Activated CD4-positive, alpha-beta T cell treated with anti-CD3 and anti-CD28 coated beads for 36 hours (primary cell): ENCODE measurements at regions of chr2 and their contacts with region 1.

Region 1: DNA sequence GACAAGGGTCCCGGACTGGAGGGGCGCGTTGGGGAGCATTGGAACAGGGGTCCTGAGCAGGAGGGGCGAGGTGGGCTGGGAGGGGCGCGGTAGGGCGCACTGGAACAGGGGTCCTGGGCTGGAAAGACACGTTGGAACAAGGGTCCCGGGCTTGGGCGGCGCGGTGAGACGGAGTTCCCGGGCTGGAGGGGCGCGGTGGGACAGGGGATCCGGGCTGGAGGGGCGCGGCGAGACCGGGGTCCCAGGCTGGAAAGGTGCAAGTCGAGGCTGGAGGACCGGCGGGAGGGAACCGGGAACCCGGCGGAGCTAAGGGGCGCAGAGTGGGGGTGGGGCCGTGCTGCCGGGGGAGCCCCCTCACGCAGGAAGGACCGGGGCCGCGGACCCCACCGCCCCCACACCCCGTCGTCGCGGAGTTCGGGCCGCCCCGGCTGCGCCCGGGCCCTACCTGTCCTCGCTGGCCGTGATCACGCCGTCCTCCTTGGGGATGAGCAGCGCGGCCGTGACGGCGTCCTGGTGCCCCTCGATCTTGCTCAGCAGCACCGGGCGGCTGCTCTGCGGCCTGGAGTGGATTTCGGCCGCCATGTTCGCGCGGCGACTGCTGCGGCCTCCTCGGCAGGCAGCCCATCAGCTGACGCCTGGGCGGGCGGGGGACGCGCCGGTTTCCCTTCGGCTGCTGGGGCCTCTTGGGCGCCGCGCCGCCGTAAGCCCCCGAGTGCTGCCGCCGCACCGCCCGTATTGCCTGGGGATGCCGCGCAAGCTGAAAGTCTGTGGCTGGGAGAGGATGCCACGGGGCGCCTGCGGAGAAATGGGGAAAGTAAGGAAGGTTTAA is at the start of gene WDFY1:
- DNase-seq: peak; percentile 90
- ATAC-seq: peak; percentile 52
- H3K4me3 Mint-ChIP-seq: peak within 1 kb of the TSS; percentile 90
- H3K27ac Mint-ChIP-seq: peak within 1 kb of the TSS; percentile 90
- H3K4me1 Mint-ChIP-seq: peaks cover 62% of the 10 kb centered on the region
- H3K27me3 Mint-ChIP-seq: peaks cover 1% of the 10 kb centered on the region
- total RNA-seq, gene WDFY1: 33.6 to 37.5 TPM

Region 2: DNA sequence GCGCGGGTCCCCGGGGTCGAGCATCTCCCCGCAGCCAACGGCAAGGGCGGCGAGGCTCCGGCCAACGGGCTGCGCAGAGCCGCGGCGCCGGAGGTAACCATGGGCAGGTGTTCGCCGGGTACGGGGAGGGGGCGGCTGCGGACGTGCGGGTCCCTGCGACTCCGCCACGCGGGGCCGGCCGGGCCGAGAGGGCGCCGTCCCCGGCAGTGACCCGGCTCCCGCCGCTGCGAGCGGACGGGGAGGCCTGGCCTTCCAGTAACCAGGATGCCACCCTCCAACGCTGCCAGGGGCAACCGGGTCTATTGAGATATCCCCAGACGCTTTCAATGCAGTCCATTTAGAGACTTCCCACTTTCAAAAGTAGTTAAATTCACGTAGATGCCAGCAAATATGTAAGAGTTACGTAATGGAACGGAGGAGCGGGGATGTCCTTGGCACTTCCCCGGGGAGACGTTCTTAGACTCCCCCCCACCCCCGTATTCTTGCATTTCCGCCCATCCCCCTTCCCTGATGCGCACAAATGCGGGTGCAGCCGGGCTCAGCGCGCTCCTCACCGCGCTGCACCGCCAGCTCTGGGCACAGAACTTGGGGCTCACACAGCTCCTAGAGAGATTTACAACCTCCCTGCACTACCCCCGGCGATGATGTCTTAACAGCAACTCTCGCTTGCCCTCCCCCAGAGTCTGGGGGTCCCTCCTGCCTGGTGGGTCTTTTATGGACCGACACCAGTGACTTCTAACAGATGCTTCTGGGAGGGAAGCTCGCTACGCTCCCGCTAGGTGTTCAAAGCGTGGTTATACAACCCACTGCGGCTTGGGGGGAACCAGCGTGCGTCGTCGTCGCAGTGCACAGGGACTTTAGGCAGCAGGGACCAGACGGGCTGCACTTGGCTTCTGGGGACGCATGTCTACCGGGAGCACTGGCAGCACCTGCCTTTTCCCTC is 1519.9 kb before region 1 on chr2:
- CTCF ChIA-PET with region 1: no interaction called
- POLR2A ChIA-PET with region 1: no interaction called
- intact Hi-C with region 1: loop called in 1 of 2 experiments (anchors 5 kb)
- DNase-seq: peak; percentile 62
- ATAC-seq: peak; percentile 27
- H3K4me3 Mint-ChIP-seq: peak overlapping the region; percentile 85
- H3K27ac Mint-ChIP-seq: peak overlapping the region; percentile 90
- H3K4me1 Mint-ChIP-seq: peaks cover 50% of the 10 kb centered on the region
- H3K27me3 Mint-ChIP-seq: peaks cover 42% of the 10 kb centered on the region

Region 3: DNA sequence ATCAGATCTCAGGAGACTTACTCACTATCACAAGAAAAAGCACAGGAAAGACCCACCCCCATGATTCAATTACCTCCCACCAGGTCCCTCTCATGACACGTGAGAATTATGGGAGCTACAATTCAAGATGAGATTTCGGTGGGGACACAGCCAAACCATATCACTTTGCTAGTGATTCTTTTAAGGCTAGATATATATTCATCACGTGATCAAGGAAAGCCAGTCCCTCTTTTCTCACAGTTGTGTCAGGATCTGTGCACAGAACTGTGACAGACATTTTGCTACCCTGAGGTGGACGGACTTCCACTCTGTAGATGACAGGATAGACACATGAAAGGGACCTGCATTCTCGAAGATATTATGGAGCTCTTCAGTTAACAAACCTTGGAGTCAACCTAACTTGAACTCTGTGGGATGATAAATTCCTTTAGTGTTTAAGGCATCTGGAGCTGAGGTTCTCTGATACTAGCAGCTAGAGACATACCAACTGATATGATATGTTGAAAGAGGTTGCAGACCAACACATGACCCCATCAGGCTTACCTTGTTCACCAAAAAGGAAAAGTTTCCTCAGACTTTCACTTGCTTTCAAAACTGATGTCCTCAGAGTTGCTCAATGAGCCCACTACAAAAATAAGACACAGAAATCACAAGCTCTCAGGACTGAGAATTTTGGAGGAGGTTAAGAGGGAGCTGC is 276.5 kb before region 1 on chr2:
- CTCF ChIA-PET with region 1: no interaction called
- POLR2A ChIA-PET with region 1: no interaction called
- intact Hi-C with region 1: no loop called
- DNase-seq: no peak
- ATAC-seq: no peak
- H3K4me3 Mint-ChIP-seq: no peak overlapping the region
- H3K27ac Mint-ChIP-seq: no peak overlapping the region
- H3K4me1 Mint-ChIP-seq: no peaks in the 10 kb centered on the region
- H3K27me3 Mint-ChIP-seq: peaks cover 10% of the 10 kb centered on the region

Region 4: DNA sequence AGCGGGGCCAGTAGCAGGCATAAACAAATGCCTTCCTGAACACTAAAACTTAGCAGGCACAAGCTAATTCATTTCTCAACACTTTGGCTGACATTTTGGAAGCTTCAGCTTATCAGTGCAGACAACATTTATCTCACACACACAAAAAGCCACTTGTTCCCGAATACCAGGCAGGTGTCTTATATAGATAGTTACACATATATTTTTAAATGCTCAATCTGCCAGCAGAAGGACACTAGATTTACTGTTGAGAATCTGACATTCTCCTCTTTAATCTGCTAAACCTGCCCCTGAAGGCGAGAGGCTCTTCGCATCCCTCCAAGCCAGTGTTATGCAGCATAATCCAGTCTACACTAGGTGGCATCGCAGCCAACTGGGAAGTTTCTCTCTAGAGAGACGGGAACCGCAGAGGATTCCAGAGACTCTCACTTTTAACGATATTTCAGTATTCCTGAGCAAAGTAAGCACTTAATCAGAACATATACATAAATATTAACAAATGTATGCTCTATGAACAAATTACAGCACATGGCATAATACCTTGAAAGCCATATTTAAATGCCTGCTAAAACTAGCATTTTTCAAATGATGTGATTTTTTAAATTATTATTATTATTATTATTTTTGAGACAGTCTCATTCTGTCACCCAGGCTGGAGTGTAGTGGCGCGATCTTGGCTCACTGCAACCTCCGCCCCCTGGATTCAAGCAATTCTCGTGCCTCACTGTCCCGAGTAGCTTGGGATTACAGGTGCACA is 252.5 kb before region 1 on chr2:
- CTCF ChIA-PET with region 1: interaction called, 3 read pairs
- POLR2A ChIA-PET with region 1: no interaction called
- intact Hi-C with region 1: loop called in 1 of 2 experiments (anchors 10 kb)
- DNase-seq: peak; percentile 24
- ATAC-seq: no peak
- H3K4me3 Mint-ChIP-seq: no peak overlapping the region
- H3K27ac Mint-ChIP-seq: no peak overlapping the region
- H3K4me1 Mint-ChIP-seq: peaks cover 4% of the 10 kb centered on the region
- H3K27me3 Mint-ChIP-seq: peaks cover 11% of the 10 kb centered on the region

Region 5: GRCh38 chr2:223846525-223846924 is 98.4 kb before region 1 on chr2:
- CTCF ChIA-PET with region 1: no interaction called
- POLR2A ChIA-PET with region 1: no interaction called
- intact Hi-C with region 1: no loop called
- DNase-seq: no peak
- ATAC-seq: no peak
- H3K4me3 Mint-ChIP-seq: no peak overlapping the region
- H3K27ac Mint-ChIP-seq: peak overlapping the region; percentile 11
- H3K4me1 Mint-ChIP-seq: peaks cover 13% of the 10 kb centered on the region
- H3K27me3 Mint-ChIP-seq: no peaks in the 10 kb centered on the region

Region 6: GRCh38 chr2:224178056-224178455 is 233.1 kb after region 1 on chr2:
- CTCF ChIA-PET with region 1: no interaction called
- POLR2A ChIA-PET with region 1: no interaction called
- intact Hi-C with region 1: no loop called
- DNase-seq: no peak
- ATAC-seq: no peak
- H3K4me3 Mint-ChIP-seq: no peak overlapping the region
- H3K27ac Mint-ChIP-seq: no peak overlapping the region
- H3K4me1 Mint-ChIP-seq: no peaks in the 10 kb centered on the region
- H3K27me3 Mint-ChIP-seq: peaks cover 7% of the 10 kb centered on the region

Region 7: GRCh38 chr2:224570328-224570993 is 625.5 kb after region 1 on chr2:
- CTCF ChIA-PET with region 1: no interaction called
- POLR2A ChIA-PET with region 1: interaction called, 13 read pairs
- intact Hi-C with region 1: loop called in 1 of 2 experiments (anchors 5 kb)
- DNase-seq: no peak
- ATAC-seq: peak; percentile 82
- H3K4me3 Mint-ChIP-seq: peak overlapping the region; percentile 2
- H3K27ac Mint-ChIP-seq: peak overlapping the region; percentile 1
- H3K4me1 Mint-ChIP-seq: peaks cover 84% of the 10 kb centered on the region
- H3K27me3 Mint-ChIP-seq: no peaks in the 10 kb centered on the region

Region 8: GRCh38 chr2:224938651-224939182 is 993.8 kb after region 1 on chr2:
- CTCF ChIA-PET with region 1: no interaction called
- POLR2A ChIA-PET with region 1: interaction called, 20 read pairs
- intact Hi-C with region 1: no loop called
- DNase-seq: peak; percentile 54
- ATAC-seq: peak; percentile 72
- H3K4me3 Mint-ChIP-seq: peak overlapping the region; percentile 68
- H3K27ac Mint-ChIP-seq: peak overlapping the region; percentile 92
- H3K4me1 Mint-ChIP-seq: peaks cover 85% of the 10 kb centered on the region
- H3K27me3 Mint-ChIP-seq: no peaks in the 10 kb centered on the region